ENCODE measurements at regions of chr1 and their contacts with region 1.

Region 1: DNA sequence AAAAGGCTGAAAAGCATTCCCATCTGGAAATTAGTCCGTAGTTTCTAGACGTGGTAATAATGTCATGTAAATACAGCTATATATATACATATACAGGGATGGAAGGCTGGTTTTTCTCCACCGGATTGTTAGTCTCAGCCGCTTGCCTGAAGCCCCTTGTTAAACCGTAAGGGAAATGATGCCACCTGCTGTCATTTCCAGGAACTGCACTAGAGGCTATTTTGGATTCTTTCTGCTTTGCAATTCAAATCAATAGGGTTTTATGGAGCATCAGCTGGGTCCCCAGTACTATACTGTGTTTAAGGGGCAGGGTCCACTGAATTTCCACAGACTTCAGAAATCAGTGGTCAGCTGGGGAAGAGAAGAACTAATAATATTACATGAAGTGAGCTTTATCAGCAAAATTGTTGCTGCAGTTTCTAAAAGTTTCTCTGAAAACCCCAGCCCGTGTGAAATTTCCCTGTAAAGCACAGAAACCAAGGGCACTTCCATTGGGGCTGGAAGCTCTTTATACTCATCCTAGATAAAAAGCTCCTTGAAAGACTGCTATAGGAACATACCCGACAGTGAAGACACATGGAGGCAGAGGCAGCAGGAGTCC is 33.8 kb upstream of the MPZL1 start:
- DNase-seq: peak; percentile 70 to 78 (median 73)
- H3K4me3 ChIP-seq: no peak overlapping the region
- H3K4me3 Mint-ChIP-seq: no peak overlapping the region
- H3K27ac ChIP-seq: peak overlapping the region; percentile 14
- H3K27ac Mint-ChIP-seq: peak overlapping the region; percentile 55 to 87 (median 70)
- H3K4me1 ChIP-seq: peaks cover 4% of the 10 kb centered on the region
- H3K4me1 Mint-ChIP-seq: peaks cover 10 to 35% (median 16%) of the 10 kb centered on the region in 4 donors
- H3K27me3 ChIP-seq: no peaks in the 10 kb centered on the region
- H3K27me3 Mint-ChIP-seq: no peaks in the 10 kb centered on the region

Region 2: GRCh38 chr1:167553136-167554027 is 134.6 kb before region 1 on chr1 and contains the start of gene CREG1:
- CTCF ChIA-PET with region 1: interaction called, 11 read pairs
- POLR2A ChIA-PET with region 1: interaction called, 3 read pairs
- intact Hi-C with region 1: loop called (anchors 1 kb)
- DNase-seq: peak; percentile 85 to 93 (median 87)
- H3K4me3 ChIP-seq: peak within 1 kb of the TSS; percentile 74 to 77
- H3K4me3 Mint-ChIP-seq: peak within 1 kb of the TSS; percentile 87 to 94 (median 90)
- H3K27ac ChIP-seq: peak within 1 kb of the TSS; percentile 41
- H3K27ac Mint-ChIP-seq: peak within 1 kb of the TSS; percentile 36 to 89 (median 84)
- H3K4me1 ChIP-seq: peaks cover 30% of the 10 kb centered on the region
- H3K4me1 Mint-ChIP-seq: peaks cover 23 to 56% (median 39%) of the 10 kb centered on the region in 4 donors
- H3K27me3 ChIP-seq: no peaks in the 10 kb centered on the region
- H3K27me3 Mint-ChIP-seq: peaks cover 0 to 3% of the 10 kb centered on the region in 2 donors
- total RNA-seq, gene CREG1: 21.0 to 21.7 TPM

Region 3: DNA sequence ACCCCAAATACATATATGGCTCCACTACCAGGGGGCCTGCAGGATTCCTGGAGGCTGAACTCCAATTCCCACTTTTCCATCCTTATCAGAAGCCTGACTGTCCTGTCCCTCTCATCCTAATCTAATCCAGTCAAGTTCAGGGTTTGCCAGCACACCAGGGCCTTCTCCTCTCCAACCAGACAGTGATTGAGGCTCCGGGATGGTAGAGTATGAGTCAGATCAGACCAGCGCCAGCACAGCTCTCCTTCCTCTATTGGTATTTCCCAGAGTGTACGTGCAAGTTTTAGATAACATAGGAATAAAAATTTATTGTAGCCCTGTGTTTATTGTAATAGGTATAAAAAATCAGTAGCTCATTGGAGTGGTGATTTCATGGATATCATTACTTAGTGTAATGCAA is 82.4 kb before region 1 on chr1:
- CTCF ChIA-PET with region 1: interaction called, 302 read pairs
- POLR2A ChIA-PET with region 1: interaction called, 46 read pairs
- intact Hi-C with region 1: loop called (anchors 1 kb)
- DNase-seq: no peak
- H3K4me3 ChIP-seq: no peak overlapping the region
- H3K4me3 Mint-ChIP-seq: no peak overlapping the region
- H3K27ac ChIP-seq: no peak overlapping the region
- H3K27ac Mint-ChIP-seq: peak overlapping the region in 2 of 7 donors; percentile 14 to 77
- H3K4me1 ChIP-seq: peaks cover 29% of the 10 kb centered on the region
- H3K4me1 Mint-ChIP-seq: peaks cover 22 to 37% (median 32%) of the 10 kb centered on the region in 4 donors
- H3K27me3 ChIP-seq: no peaks in the 10 kb centered on the region
- H3K27me3 Mint-ChIP-seq: no peaks in the 10 kb centered on the region

Region 4: GRCh38 chr1:167635156-167635648 is 52.8 kb before region 1 on chr1:
- CTCF ChIA-PET with region 1: interaction called, 97 read pairs
- POLR2A ChIA-PET with region 1: interaction called, 12 read pairs
- intact Hi-C with region 1: loop called (anchors 1 kb)
- DNase-seq: no peak
- H3K4me3 ChIP-seq: no peak overlapping the region
- H3K4me3 Mint-ChIP-seq: peak overlapping the region in 4 of 8 donors; percentile 16 to 30 (median 23)
- H3K27ac ChIP-seq: no peak overlapping the region
- H3K27ac Mint-ChIP-seq: peak overlapping the region in 4 of 7 donors; percentile 57 to 97 (median 97)
- H3K4me1 ChIP-seq: peaks cover 90% of the 10 kb centered on the region
- H3K4me1 Mint-ChIP-seq: peaks cover 59 to 98% (median 73%) of the 10 kb centered on the region in 4 donors
- H3K27me3 ChIP-seq: no peaks in the 10 kb centered on the region
- H3K27me3 Mint-ChIP-seq: no peaks in the 10 kb centered on the region

Region 5: GRCh38 chr1:167676205-167676915 is 11.7 kb before region 1 on chr1:
- CTCF ChIA-PET with region 1: interaction called, 31 read pairs
- POLR2A ChIA-PET with region 1: no interaction called
- intact Hi-C with region 1: no loop called
- DNase-seq: no peak
- H3K4me3 ChIP-seq: no peak overlapping the region
- H3K4me3 Mint-ChIP-seq: no peak overlapping the region
- H3K27ac ChIP-seq: peak overlapping the region; percentile 17
- H3K27ac Mint-ChIP-seq: peak overlapping the region in 6 of 7 donors; percentile 70 to 85 (median 78)
- H3K4me1 ChIP-seq: peaks cover 71% of the 10 kb centered on the region
- H3K4me1 Mint-ChIP-seq: peaks cover 27 to 50% (median 41%) of the 10 kb centered on the region in 4 donors
- H3K27me3 ChIP-seq: no peaks in the 10 kb centered on the region
- H3K27me3 Mint-ChIP-seq: no peaks in the 10 kb centered on the region

Region 6: GRCh38 chr1:167752219-167752985 is 64.4 kb after region 1 on chr1:
- CTCF ChIA-PET with region 1: no interaction called
- POLR2A ChIA-PET with region 1: no interaction called
- intact Hi-C with region 1: no loop called
- DNase-seq: no peak
- H3K4me3 ChIP-seq: no peak overlapping the region
- H3K4me3 Mint-ChIP-seq: no peak overlapping the region
- H3K27ac ChIP-seq: no peak overlapping the region
- H3K27ac Mint-ChIP-seq: peak overlapping the region in 1 of 7 donors; percentile 57
- H3K4me1 ChIP-seq: no peaks in the 10 kb centered on the region
- H3K4me1 Mint-ChIP-seq: peaks cover 0 to 6% (median 4%) of the 10 kb centered on the region in 4 donors
- H3K27me3 ChIP-seq: no peaks in the 10 kb centered on the region
- H3K27me3 Mint-ChIP-seq: no peaks in the 10 kb centered on the region

Region 7: GRCh38 chr1:167763525-167764220 is 75.7 kb after region 1 on chr1:
- CTCF ChIA-PET with region 1: no interaction called
- POLR2A ChIA-PET with region 1: no interaction called
- intact Hi-C with region 1: no loop called
- DNase-seq: no peak
- H3K4me3 ChIP-seq: no peak overlapping the region
- H3K4me3 Mint-ChIP-seq: no peak overlapping the region
- H3K27ac ChIP-seq: no peak overlapping the region
- H3K27ac Mint-ChIP-seq: no peak overlapping the region
- H3K4me1 ChIP-seq: peaks cover 16% of the 10 kb centered on the region
- H3K4me1 Mint-ChIP-seq: peaks cover 14 to 18% (median 14%) of the 10 kb centered on the region in 4 donors
- H3K27me3 ChIP-seq: no peaks in the 10 kb centered on the region
- H3K27me3 Mint-ChIP-seq: no peaks in the 10 kb centered on the region